ENCODE measurements at regions of chr5 and their contacts with region 1.

Region 1: GRCh38 chr5:175718401-175719108 is 60.7 kb downstream of the HRH2 start:
- DNase-seq: peak in 1 of 2 donors; percentile 71
- H3K4me3 ChIP-seq: no peak overlapping the region
- H3K27ac ChIP-seq: no peak overlapping the region
- H3K4me1 ChIP-seq: no peaks in the 10 kb centered on the region
- H3K27me3 ChIP-seq: no peaks in the 10 kb centered on the region
- CTCF ChIP-seq: peak; percentile 31 to 59 (median 51)

Region 2: DNA sequence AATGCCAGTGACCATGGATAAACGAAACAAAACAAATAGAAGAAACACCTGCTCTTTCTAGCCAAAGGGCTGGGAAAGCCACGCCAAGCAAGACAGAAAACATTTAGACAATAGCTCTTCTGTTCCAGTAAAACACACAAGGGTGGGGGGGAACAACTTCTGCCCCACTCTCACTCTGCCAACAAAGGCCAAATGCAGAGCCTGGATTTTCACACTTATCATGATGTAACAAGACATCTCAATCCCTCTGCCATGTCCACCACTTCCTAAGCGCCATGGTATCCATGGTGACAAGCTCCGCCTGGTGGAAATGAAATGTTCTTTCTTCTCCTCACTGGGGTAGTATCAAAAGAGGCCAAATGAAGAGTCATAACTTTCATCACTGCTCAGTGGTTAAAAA is 335.2 kb before region 1 on chr5:
- intact Hi-C with region 1: no loop called
- DNase-seq: no peak
- H3K4me3 ChIP-seq: no peak overlapping the region
- H3K27ac ChIP-seq: no peak overlapping the region
- H3K4me1 ChIP-seq: no peaks in the 10 kb centered on the region
- H3K27me3 ChIP-seq: no peaks in the 10 kb centered on the region
- CTCF ChIP-seq: no peak

Region 3: GRCh38 chr5:175534070-175534932 is 184.3 kb before region 1 on chr5:
- intact Hi-C with region 1: loop called (anchors 2 kb)
- DNase-seq: peak; percentile 20 to 83
- H3K4me3 ChIP-seq: no peak overlapping the region
- H3K27ac ChIP-seq: no peak overlapping the region
- H3K4me1 ChIP-seq: no peaks in the 10 kb centered on the region
- H3K27me3 ChIP-seq: no peaks in the 10 kb centered on the region
- CTCF ChIP-seq: peak; percentile 89 to 98 (median 97)

Region 4: DNA sequence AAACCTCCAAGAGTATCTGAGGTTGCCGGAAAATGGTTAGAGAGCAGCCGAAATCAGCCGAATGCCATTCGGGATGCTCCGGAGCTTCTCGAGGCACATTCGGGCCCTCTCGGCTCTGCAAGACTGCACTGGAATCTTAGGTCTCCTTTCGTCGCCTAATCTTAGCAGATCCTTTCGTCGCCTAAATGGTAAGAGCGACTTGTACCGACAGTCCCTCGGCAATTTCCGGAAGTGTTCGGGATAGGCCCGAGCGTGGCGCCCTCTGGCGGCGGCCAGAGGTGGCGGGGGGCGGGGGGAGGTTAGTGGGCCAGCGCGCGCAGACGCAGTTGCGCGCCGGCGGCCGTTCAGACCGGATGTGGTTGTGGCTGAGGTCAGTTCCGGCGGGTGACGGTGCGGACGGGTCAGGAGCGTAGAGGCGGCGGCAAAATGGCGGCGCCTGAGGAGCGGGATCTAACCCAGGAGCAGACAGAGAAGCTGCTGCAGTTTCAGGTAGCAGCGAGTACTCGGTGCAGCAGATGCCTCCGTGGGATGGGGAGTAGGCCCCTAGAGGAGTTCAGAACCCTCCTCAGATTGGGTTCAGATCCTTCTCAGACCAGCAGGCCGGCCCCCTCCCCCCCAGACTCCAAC is 729.5 kb after region 1 on chr5 and contains the start of gene FAF2:
- intact Hi-C with region 1: no loop called
- DNase-seq: peak; percentile 87 to 98
- H3K4me3 ChIP-seq: peak within 1 kb of the TSS; percentile 88 to 94
- H3K27ac ChIP-seq: peak within 1 kb of the TSS; percentile 91 to 92
- H3K4me1 ChIP-seq: peaks cover 6 to 17% of the 10 kb centered on the region in 2 donors
- H3K27me3 ChIP-seq: no peaks in the 10 kb centered on the region
- CTCF ChIP-seq: peak; percentile 97 to 98 (median 97)
- total RNA-seq, gene FAF2: 18.7 TPM